Upper lobe of right lung (tissue), 1 donor: ENCODE measurements at regions of chr3 and their contacts with region 1.

Region 1: GRCh38 chr3:49553692-49554632 is at the start of gene BSN:
- DNase-seq: peak; percentile 94
- ATAC-seq: peak; percentile 92
- H3K4me3 ChIP-seq: peak within 1 kb of the TSS; percentile 84
- H3K27ac ChIP-seq: peak within 1 kb of the TSS; percentile 34
- H3K4me1 ChIP-seq: peaks cover 16% of the 10 kb centered on the region
- H3K27me3 ChIP-seq: no peaks in the 10 kb centered on the region
- CTCF ChIP-seq: no peak
- total RNA-seq, gene BSN: 0.43 TPM

Region 2: DNA sequence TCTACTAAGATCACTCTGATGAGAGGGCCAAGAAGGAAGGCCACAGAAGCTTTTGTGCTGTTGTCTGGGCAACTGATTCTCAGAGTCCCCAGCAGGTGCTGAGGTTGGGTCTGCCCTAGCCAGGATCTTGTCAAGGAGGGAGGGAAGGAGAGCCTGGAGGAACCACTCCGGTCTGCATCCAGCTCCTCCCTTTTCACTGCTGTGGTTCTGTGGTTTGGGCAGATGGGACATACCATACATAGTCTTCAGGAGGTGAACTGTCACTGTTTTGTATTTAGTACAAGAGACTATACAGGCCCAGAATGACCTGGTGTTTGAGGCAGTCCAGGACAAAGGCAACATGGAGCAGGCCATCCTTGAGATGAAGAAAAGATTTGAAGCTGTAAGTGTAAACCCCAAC is 298.9 kb before region 1 on chr3:
- intact Hi-C with region 1: no loop called
- DNase-seq: peak; percentile 7
- ATAC-seq: peak; percentile 76
- H3K4me3 ChIP-seq: no peak overlapping the region
- H3K27ac ChIP-seq: no peak overlapping the region
- H3K4me1 ChIP-seq: no peaks in the 10 kb centered on the region
- H3K27me3 ChIP-seq: no peaks in the 10 kb centered on the region
- CTCF ChIP-seq: no peak

Region 3: GRCh38 chr3:49500205-49500731 is 53.7 kb before region 1 on chr3:
- intact Hi-C with region 1: no loop called
- DNase-seq: no peak
- ATAC-seq: no peak
- H3K4me3 ChIP-seq: no peak overlapping the region
- H3K27ac ChIP-seq: peak overlapping the region; percentile 33
- H3K4me1 ChIP-seq: peaks cover 18% of the 10 kb centered on the region
- H3K27me3 ChIP-seq: no peaks in the 10 kb centered on the region
- CTCF ChIP-seq: no peak

Region 4: GRCh38 chr3:49668414-49668797 is 114.4 kb after region 1 on chr3:
- intact Hi-C with region 1: loop called (anchors 10 kb)
- DNase-seq: no peak
- ATAC-seq: no peak
- H3K4me3 ChIP-seq: no peak overlapping the region
- H3K27ac ChIP-seq: no peak overlapping the region
- H3K4me1 ChIP-seq: peaks cover 4% of the 10 kb centered on the region
- H3K27me3 ChIP-seq: no peaks in the 10 kb centered on the region
- CTCF ChIP-seq: no peak